Activated CD4-positive, alpha-beta memory T cell treated with anti-CD3 and anti-CD28 coated beads for 36 hours (primary cell): ENCODE measurements at regions of chr12 and their contacts with region 1.

Region 1: GRCh38 chr12:47032644-47033043 is 46.8 kb upstream of the PCED1B start:
- DNase-seq: no peak
- H3K4me3 Mint-ChIP-seq: no peak overlapping the region
- H3K27ac Mint-ChIP-seq: no peak overlapping the region
- H3K4me1 Mint-ChIP-seq: peaks cover 37% of the 10 kb centered on the region
- H3K27me3 Mint-ChIP-seq: no peaks in the 10 kb centered on the region

Region 2: GRCh38 chr12:46855760-46856159 is 176.9 kb before region 1 on chr12:
- CTCF ChIA-PET with region 1: no interaction called
- POLR2A ChIA-PET with region 1: no interaction called
- intact Hi-C with region 1: no loop called
- DNase-seq: no peak
- H3K4me3 Mint-ChIP-seq: no peak overlapping the region
- H3K27ac Mint-ChIP-seq: no peak overlapping the region
- H3K4me1 Mint-ChIP-seq: no peaks in the 10 kb centered on the region
- H3K27me3 Mint-ChIP-seq: peaks cover under 1% of the 10 kb centered on the region

Region 3: DNA sequence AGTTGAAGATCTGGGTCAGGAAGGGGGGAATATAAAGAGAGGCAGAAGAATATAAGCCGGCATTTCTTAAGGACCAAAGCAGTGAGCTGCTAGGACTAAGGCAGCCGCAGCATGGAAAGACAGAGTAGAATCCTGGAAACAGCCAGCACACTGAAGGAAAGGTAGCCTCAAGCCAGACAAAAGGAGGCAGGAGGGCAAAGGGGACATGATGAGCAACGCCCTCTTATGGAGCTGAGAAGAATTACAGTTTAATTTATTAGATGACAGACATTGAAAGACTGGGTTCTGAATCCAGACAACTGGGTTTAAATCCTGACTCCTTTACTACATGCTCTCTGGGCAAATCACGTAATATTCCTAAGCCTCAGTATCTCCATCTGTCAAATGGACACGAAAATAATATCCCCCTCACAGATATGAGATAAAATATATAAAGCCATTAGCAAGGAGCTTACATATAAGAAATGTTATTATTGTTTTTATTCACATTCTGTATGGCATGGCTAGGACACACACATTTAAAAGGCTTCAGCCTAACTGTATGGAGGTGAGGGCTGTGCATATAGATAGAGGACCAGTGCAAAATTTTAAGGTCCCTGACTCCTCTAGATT is 38.7 kb after region 1 on chr12:
- CTCF ChIA-PET with region 1: interaction called, 56 read pairs
- POLR2A ChIA-PET with region 1: no interaction called
- intact Hi-C with region 1: loop called (anchors 1 kb)
- DNase-seq: no peak
- H3K4me3 Mint-ChIP-seq: no peak overlapping the region
- H3K27ac Mint-ChIP-seq: no peak overlapping the region
- H3K4me1 Mint-ChIP-seq: peaks cover 21% of the 10 kb centered on the region
- H3K27me3 Mint-ChIP-seq: no peaks in the 10 kb centered on the region

Region 4: DNA sequence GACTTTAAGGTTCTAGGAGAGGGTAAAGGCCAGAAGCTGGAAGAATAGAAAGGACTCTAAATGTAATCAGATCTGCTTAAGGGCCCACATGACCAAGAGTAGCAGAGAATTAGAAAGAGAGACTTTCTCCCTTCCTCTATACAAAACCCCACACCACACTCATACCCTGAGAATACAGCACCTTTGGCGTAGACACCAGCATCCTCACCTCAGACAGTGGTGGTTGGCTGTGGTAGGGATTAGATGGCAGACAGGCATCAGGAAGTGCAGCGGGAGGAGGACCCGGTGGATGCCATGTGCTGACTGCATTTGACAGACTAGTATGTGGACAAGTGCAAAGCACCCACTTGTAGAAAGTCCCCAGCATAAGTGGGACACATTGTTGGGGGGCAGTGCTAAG is 145.4 kb after region 1 on chr12:
- CTCF ChIA-PET with region 1: no interaction called
- POLR2A ChIA-PET with region 1: no interaction called
- intact Hi-C with region 1: no loop called
- DNase-seq: no peak
- H3K4me3 Mint-ChIP-seq: no peak overlapping the region
- H3K27ac Mint-ChIP-seq: no peak overlapping the region
- H3K4me1 Mint-ChIP-seq: peaks cover 16% of the 10 kb centered on the region
- H3K27me3 Mint-ChIP-seq: no peaks in the 10 kb centered on the region

Region 5: GRCh38 chr12:47207340-47207717 is 174.7 kb after region 1 on chr12:
- CTCF ChIA-PET with region 1: interaction called, 12 read pairs
- POLR2A ChIA-PET with region 1: interaction called, 3 read pairs
- intact Hi-C with region 1: no loop called
- DNase-seq: peak; percentile 75
- H3K4me3 Mint-ChIP-seq: peak overlapping the region; percentile 85
- H3K27ac Mint-ChIP-seq: peak overlapping the region; percentile 96
- H3K4me1 Mint-ChIP-seq: peaks cover 80% of the 10 kb centered on the region
- H3K27me3 Mint-ChIP-seq: no peaks in the 10 kb centered on the region

Region 6: GRCh38 chr12:47307680-47308399 is 275.2 kb after region 1 on chr12:
- CTCF ChIA-PET with region 1: interaction called, 20 read pairs
- POLR2A ChIA-PET with region 1: no interaction called
- intact Hi-C with region 1: loop called (anchors 1 kb)
- DNase-seq: peak; percentile 68
- H3K4me3 Mint-ChIP-seq: peak overlapping the region; percentile 82
- H3K27ac Mint-ChIP-seq: peak overlapping the region; percentile 90
- H3K4me1 Mint-ChIP-seq: peaks cover 75% of the 10 kb centered on the region
- H3K27me3 Mint-ChIP-seq: no peaks in the 10 kb centered on the region

Region 7: GRCh38 chr12:47651368-47652254 is 619.0 kb after region 1 on chr12:
- CTCF ChIA-PET with region 1: interaction called, 6 read pairs
- POLR2A ChIA-PET with region 1: no interaction called
- intact Hi-C with region 1: loop called (anchors 5 kb)
- DNase-seq: peak; percentile 64
- H3K4me3 Mint-ChIP-seq: no peak overlapping the region
- H3K27ac Mint-ChIP-seq: no peak overlapping the region
- H3K4me1 Mint-ChIP-seq: peaks cover 20% of the 10 kb centered on the region
- H3K27me3 Mint-ChIP-seq: no peaks in the 10 kb centered on the region

Region 8: DNA sequence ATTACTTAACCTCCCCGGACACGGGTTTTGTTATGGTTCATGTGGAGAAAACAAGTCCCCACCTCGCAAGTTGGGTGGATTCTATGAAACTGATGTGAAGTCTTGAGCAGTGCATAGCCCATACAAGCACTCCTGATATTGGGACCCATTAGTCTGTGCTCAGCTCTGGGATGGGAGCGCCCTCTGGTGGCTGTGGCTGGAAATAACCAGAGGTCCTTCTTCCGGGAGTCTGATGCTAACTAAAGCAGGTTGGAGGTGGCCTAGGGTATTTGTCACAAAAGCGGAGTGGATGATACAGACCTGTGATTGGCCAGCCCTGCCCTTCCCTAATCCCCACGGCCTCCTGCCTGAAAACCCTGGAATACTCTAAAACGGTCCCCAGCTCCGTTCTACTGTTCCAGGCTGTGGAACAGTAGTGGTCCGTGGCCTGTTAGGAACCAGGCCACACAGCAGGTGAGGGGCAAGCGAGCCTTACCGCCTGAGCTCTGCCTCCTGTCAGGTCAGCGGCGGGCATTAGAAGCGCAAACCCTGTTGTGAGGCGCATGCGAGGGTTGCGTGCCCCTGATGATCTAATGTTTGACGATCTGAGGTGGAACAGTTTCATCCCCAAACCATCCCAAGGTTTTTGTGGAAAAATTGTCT is 746.8 kb after region 1 on chr12:
- CTCF ChIA-PET with region 1: interaction called, 3 read pairs
- POLR2A ChIA-PET with region 1: no interaction called
- intact Hi-C with region 1: loop called (anchors 2 kb)
- DNase-seq: peak; percentile 95
- H3K4me3 Mint-ChIP-seq: no peak overlapping the region
- H3K27ac Mint-ChIP-seq: no peak overlapping the region
- H3K4me1 Mint-ChIP-seq: peaks cover 17% of the 10 kb centered on the region
- H3K27me3 Mint-ChIP-seq: no peaks in the 10 kb centered on the region